ENCODE measurements at regions of chr11 and their contacts with region 1.

Region 1: DNA sequence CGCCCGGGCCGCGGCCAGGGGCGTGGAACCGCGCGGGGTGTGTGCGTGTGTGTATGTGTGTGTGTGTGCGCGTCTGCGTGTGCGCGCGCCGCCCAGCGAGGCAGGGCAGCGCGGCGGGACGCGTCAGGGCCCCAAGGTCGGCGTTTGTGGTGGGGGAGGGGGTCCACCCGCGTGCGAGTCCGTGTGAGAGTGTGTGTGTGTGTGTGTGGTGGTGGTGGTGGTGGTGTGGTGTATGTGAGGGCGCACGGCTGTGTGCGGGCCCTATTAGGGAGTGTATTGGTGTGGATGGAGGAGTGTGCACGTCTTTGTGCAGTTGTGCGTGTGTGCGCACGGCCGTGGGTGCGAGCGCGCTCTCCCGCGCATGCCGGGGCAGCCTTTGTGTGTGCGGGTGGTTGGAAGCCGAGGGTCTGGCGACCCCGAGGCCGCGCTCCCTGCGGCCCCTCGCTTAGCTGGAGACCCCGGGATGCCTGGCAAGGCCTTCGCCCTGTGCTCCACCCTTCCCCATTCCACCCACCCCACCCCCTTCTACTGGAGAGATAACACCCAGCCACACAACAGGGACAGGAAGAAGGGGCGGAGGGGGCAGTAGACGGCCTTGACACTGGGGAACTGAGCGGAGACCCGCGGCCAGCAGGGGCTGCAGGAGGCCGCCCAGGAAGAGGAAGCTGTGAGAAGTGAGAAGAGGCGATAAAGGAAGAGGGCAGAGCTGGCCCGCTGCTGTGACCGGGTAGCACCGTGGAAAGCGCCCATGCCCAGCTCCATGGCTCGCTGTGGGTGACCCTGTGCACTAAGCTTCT is 528 bp upstream of the ARRB1 start:
- DNase-seq: peak; percentile 64
- ATAC-seq: peak; percentile 55
- H3K4me3 Mint-ChIP-seq: peak overlapping the region; percentile 79
- H3K27ac Mint-ChIP-seq: peak overlapping the region; percentile 86
- H3K4me1 Mint-ChIP-seq: peaks cover 49% of the 10 kb centered on the region
- H3K27me3 Mint-ChIP-seq: no peaks in the 10 kb centered on the region
- CTCF ChIP-seq: no peak

Region 2: GRCh38 chr11:75270896-75271418 is 81.0 kb before region 1 on chr11:
- CTCF ChIA-PET with region 1: interaction called, 13 read pairs
- POLR2A ChIA-PET with region 1: interaction called, 5 read pairs
- intact Hi-C with region 1: no loop called
- DNase-seq: peak; percentile 37
- ATAC-seq: no peak
- H3K4me3 Mint-ChIP-seq: no peak overlapping the region
- H3K27ac Mint-ChIP-seq: no peak overlapping the region
- H3K4me1 Mint-ChIP-seq: peaks cover 30% of the 10 kb centered on the region
- H3K27me3 Mint-ChIP-seq: no peaks in the 10 kb centered on the region
- CTCF ChIP-seq: peak; percentile 36

Region 3: DNA sequence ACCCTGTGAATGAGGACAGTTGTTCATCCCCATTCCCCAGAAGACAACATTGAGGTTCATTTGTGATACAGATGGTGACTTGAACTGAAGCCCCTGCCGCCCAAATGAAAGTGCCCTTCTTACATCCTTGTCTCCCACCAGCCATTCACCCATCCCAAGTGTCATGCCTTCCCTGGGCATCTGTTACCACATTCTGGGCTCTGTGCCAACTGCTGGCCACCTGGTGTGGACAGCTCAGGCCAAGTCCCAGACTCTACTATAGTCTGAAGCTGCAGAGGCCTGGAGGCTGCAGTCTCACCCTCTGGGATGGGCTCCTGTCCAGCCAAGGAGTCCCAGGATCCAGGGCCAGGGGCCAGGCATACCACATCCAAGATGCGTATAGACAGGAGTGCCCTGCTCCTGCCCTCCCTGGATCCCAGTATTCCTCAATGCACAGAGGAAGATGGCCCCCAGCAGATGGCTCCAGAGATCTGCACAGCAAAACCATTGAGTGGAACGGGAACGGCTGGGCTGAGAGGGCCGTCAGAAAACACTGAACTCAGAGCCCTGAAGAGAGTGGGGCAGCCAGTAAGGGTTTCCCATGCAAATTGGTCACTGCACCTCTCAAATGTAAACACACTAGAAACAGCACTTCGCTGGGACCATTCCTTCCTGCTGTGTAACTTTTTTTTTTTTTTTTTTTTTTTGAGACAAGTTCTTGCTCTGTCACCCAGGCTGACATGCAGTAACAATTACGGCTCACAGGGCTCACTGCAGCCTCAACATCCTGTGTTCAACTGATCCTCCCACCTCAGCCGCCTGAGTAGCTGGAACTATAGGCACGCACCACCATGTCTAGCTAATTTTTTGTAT is 23.3 kb before region 1 on chr11:
- CTCF ChIA-PET with region 1: interaction called, 11 read pairs
- POLR2A ChIA-PET with region 1: interaction called, 18 read pairs
- intact Hi-C with region 1: no loop called
- DNase-seq: peak; percentile 81
- ATAC-seq: peak; percentile 67
- H3K4me3 Mint-ChIP-seq: no peak overlapping the region
- H3K27ac Mint-ChIP-seq: peak overlapping the region; percentile 18
- H3K4me1 Mint-ChIP-seq: peaks cover 65% of the 10 kb centered on the region
- H3K27me3 Mint-ChIP-seq: no peaks in the 10 kb centered on the region
- CTCF ChIP-seq: no peak

Region 4: DNA sequence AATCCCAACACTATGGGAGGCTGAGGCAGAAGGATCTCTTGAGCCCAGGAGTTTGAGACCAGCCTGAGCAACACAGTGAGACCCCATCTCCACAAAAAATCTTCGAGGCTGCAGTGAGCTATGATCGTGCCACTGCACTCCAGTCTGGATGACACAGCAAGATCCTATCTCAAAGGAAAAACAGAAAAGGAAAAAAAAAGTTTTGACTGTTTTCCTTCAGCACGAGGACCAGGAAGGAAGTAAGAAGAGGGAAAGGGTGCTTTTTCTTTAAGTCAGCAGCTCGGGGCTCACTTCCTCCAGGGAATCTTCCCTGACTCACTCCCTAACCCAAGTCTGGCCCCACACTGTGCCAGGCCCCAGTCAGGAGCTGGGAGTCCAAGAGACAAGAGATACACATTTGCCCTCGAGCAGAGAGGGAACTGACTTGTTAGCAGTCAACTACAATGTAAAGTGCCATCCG is 14.8 kb before region 1 on chr11:
- CTCF ChIA-PET with region 1: interaction called, 11 read pairs
- POLR2A ChIA-PET with region 1: interaction called, 47 read pairs
- intact Hi-C with region 1: no loop called
- DNase-seq: no peak
- ATAC-seq: no peak
- H3K4me3 Mint-ChIP-seq: no peak overlapping the region
- H3K27ac Mint-ChIP-seq: peak overlapping the region; percentile 5
- H3K4me1 Mint-ChIP-seq: peaks cover 81% of the 10 kb centered on the region
- H3K27me3 Mint-ChIP-seq: no peaks in the 10 kb centered on the region
- CTCF ChIP-seq: no peak

Region 5: DNA sequence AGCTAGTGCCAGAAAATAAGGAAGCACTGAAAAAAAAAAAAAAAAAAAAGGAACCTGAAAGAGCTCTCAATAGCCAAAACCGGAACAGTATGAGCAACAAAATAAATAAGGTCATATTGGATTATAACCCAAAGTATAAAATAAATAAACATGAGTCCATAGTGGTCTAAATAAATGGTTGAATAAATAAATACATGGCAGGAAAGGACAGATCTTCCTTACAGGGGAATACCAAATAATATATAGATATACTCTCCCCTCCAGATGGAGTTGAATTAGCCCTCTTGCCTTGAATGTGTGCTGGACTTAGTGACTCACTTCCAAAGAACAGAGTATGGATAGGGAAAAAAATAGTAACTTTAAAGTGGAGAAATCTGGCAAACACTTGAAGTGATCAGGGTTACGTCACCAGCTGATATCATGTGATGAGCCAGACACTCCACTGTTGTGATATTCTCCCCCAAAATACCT is 13.8 kb after region 1 on chr11:
- CTCF ChIA-PET with region 1: interaction called, 10 read pairs
- POLR2A ChIA-PET with region 1: interaction called, 4 read pairs
- intact Hi-C with region 1: no loop called
- DNase-seq: no peak
- ATAC-seq: no peak
- H3K4me3 Mint-ChIP-seq: no peak overlapping the region
- H3K27ac Mint-ChIP-seq: no peak overlapping the region
- H3K4me1 Mint-ChIP-seq: peaks cover 11% of the 10 kb centered on the region
- H3K27me3 Mint-ChIP-seq: no peaks in the 10 kb centered on the region
- CTCF ChIP-seq: no peak

Region 6: DNA sequence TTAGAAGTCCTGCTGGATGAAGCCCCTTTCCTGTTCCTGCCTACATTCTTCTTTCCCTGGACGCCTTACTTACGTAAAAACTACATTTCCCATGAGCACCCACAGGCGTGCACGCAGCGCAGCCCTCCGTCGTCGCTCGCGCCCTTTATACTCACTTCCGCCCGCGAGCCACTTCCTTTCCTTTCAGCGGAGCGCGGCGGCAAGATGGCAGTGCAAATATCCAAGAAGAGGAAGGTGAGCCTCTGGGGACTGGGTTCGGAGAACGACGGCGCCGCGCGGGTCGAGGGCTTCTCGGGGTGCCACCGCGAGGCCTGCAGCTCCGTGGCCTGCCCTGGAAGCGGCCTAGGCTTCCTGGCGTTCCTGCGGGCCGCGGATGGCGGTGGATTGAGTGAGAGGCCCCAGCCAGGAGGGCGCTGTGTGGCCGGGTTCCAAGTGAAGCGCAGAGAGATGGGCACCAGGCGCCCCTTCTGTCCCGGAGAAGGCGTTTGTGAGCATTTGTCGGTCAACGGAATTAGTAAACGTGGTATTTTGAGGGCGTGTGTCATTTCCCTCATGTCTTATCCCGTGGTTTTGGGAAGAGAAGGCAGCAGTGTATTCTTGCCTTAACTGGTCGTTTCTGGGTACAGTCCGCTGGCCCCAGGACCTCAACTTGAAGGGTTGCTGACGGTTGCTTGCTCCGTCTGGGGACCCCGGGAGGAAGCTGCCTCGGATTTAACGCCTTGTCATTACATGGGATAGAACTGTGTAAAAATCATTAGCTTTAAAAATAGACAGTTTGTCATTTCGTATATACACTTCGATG is 47.6 kb after region 1 on chr11 and contains the start of gene RPS3:
- CTCF ChIA-PET with region 1: no interaction called
- POLR2A ChIA-PET with region 1: interaction called, 10 read pairs
- intact Hi-C with region 1: no loop called
- DNase-seq: peak; percentile 93
- ATAC-seq: peak; percentile 91
- H3K4me3 Mint-ChIP-seq: peak within 1 kb of the TSS; percentile 100
- H3K27ac Mint-ChIP-seq: peak within 1 kb of the TSS; percentile 99
- H3K4me1 Mint-ChIP-seq: peaks cover 43% of the 10 kb centered on the region
- H3K27me3 Mint-ChIP-seq: no peaks in the 10 kb centered on the region
- CTCF ChIP-seq: no peak
- total RNA-seq, gene RPS3: 4,906 to 4,954 TPM